MCF 10A (cell line): ENCODE measurements at regions of chr15 and their contacts with region 1.

Region 1: DNA sequence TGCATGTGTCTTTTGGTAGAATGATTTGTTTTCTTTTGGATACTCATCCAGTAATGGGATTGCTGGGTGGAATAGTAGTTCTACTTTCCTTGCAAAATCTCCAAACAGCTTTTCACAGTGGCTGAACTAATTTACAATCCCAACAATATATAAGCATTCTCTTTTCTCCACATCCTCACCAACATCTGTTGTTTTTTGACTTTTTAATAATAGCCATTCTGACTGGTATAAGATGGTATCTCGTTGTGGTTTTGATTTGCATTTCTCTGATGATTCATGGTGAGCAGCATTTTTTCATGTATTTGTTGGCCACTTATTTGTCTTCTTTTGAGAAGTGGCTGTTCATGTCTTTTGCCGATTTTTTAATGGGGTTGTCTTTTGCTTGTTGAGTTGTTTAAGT is 55.8 kb downstream of the ST8SIA2 start:
- DNase-seq: no peak
- H3K4me3 Mint-ChIP-seq: no peak overlapping the region
- H3K27ac Mint-ChIP-seq: no peak overlapping the region
- H3K4me1 Mint-ChIP-seq: peaks cover 9% of the 10 kb centered on the region
- H3K27me3 Mint-ChIP-seq: no peaks in the 10 kb centered on the region
- CTCF ChIP-seq: no peak

Region 2: GRCh38 chr15:92492551-92493115 is 43.2 kb after region 1 on chr15:
- CTCF ChIA-PET with region 1: no interaction called
- POLR2A ChIA-PET with region 1: no interaction called
- intact Hi-C with region 1: loop called (anchors 10 kb)
- DNase-seq: no peak
- H3K4me3 Mint-ChIP-seq: no peak overlapping the region
- H3K27ac Mint-ChIP-seq: no peak overlapping the region
- H3K4me1 Mint-ChIP-seq: no peaks in the 10 kb centered on the region
- H3K27me3 Mint-ChIP-seq: peaks cover 60% of the 10 kb centered on the region
- CTCF ChIP-seq: no peak